ENCODE measurements at regions of chr9 and their contacts with region 1.

Region 1: DNA sequence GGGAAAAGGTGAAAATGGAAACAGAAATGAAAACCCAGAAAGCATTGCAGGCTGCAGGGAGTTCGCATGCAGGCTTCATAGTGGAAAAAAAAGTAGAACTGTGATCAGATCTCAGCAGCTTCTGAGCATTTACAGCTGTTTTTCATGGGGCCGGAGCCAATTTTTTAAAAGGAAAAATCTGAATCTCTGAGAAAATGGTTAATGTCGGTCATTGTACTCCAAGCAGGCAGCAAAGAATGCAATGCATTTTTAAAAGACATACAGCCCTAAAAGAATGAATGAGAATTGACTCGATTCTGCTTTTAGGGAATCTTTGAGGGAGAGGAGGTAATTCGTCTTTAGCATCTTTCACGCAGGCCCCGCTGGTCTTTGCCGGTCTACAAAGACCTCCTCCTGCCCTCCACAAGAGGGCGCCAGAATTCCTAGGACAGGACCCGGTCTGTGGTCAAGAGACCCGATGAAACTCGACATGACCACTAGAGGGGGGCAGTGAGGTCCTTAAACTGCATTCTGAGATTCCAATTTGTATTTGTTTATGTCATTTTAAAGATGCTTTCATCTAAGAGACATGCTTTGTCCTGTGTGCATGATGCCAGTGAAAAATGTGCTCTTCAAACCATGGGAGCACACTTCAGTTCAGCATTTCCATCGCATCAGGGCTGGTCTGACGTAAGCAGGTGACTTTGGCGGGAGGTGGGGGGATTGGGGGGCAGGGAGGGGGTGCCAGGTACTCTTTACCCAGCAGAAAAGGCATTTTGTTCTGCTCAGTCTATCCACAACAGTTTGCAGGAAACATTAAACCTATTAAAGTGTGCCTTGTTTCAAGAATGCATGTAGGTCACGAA is 43.7 kb upstream of the TMEM252 start:
- DNase-seq: peak; percentile 87 to 89
- ATAC-seq: peak; percentile 95
- H3K4me3 ChIP-seq: no peak overlapping the region
- H3K27ac ChIP-seq: no peak overlapping the region
- H3K4me1 ChIP-seq: no peaks in the 10 kb centered on the region
- H3K27me3 ChIP-seq: no peaks in the 10 kb centered on the region

Region 2: DNA sequence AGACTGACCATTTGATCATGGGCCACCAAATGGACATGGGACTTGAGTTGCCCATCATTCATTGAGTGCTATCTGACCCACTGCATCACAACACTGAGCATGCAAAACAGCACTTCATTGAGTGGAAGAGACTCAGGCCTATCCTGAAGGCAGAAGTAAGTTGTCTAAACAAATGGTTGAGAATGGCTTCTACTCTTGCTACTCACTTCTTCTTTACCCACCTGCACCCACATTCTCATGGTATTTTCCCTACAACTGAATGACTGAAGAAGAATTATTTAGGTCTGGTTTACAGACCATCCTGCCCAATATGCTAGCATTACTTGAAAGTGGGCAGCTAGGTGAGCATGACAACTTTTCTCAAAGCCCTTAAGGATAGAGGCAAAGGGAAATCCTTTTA is 79.6 kb after region 1 on chr9:
- intact Hi-C with region 1: no loop called
- DNase-seq: no peak
- ATAC-seq: no peak
- H3K4me3 ChIP-seq: no peak overlapping the region
- H3K27ac ChIP-seq: no peak overlapping the region
- H3K4me1 ChIP-seq: no peaks in the 10 kb centered on the region
- H3K27me3 ChIP-seq: no peaks in the 10 kb centered on the region

Region 3: DNA sequence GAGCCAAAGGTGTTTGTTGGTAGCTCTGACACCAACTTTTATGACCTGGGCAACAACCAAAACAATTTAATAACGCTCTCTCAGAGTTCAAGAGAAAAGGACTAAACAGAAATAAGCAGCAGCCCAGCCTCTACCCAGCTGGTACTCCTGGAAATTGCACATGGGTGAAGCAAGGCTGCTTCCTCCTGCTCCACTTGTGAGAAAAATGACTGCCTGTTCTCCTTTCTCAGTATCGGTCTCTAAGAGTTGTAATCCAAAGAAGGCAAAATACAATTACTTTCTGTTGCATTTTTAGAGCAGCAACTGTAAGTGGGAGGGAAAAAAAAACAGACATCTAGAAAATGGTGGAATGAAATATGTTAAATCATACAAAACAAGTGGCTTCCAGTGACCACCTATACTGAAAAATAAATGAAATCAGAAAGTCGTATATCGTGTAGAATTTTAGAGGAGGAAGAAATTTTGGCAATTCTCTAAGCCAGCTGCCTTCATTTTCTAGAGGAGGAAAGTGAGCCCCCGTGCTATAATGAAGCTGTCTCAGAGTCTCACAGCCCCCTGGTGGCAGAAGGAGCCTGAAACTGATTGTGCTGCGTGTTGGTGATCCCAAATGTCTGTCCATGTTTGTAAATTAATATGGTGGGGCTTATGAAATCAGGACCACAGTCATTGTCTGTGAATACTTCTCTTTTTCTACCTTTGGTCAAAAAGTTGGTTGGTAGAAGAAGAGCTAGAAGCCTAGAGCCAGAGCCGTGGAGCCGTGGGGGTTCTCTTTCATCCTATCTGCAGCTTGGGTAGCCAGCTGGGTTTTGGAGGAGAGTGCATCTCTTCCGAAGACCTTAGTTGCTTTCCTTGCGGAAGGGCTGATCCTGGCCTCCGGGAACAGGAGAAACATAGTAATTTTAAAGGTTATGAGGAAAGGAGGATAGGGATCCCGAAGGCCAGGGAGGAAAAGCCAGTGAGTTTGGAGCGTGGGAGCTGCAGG is 260.5 kb after region 1 on chr9:
- intact Hi-C with region 1: loop called (anchors 5 to 10 kb)
- DNase-seq: peak; percentile 62 to 81
- ATAC-seq: peak; percentile 58
- H3K4me3 ChIP-seq: no peak overlapping the region
- H3K27ac ChIP-seq: no peak overlapping the region
- H3K4me1 ChIP-seq: no peaks in the 10 kb centered on the region
- H3K27me3 ChIP-seq: no peaks in the 10 kb centered on the region

Region 4: DNA sequence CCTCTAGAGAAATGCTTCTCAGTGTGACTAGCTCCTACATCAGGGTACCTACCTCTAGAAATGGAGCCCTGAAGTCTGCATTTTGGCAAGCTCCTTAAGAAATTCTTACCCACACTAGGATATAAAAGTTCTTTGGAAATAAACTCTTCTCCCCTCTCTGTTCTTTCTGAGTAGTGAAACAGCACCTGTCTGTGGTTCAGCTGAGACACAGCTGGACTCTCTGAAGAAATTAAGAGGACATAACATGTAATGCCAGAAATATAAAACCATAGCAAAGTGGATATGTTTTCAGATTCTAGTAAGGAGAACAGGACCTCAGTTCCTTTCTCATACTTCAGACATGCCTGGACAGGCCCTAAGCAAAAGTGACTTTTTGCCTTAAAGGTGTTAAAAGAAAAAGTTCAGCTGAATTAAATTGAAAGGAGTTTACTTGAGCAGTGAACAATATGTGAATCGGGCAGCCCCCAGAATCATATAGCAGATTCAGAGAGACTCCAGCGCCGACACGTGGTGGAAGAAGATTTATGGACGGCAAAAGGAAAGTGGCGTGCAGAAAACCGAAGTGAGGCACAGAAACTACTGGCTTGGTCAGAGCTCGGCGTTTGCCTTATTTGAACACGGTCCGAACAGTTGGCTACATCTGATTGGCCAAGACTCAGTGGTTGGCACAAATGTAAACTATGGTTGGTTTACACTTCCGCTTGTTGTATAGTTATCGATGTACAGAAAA is 365.0 kb after region 1 on chr9:
- intact Hi-C with region 1: loop called (anchors 2 to 5 kb)
- DNase-seq: peak; percentile 57 to 78
- ATAC-seq: peak; percentile 63
- H3K4me3 ChIP-seq: no peak overlapping the region
- H3K27ac ChIP-seq: no peak overlapping the region
- H3K4me1 ChIP-seq: no peaks in the 10 kb centered on the region
- H3K27me3 ChIP-seq: peaks cover 0 to 1% of the 10 kb centered on the region in 2 donors

Region 5: GRCh38 chr9:68999393-69000105 is 415.1 kb after region 1 on chr9:
- intact Hi-C with region 1: loop called in 1 of 2 experiments (anchors 2 kb)
- DNase-seq: peak in 1 of 2 donors; percentile 56
- ATAC-seq: peak; percentile 85
- H3K4me3 ChIP-seq: no peak overlapping the region
- H3K27ac ChIP-seq: no peak overlapping the region
- H3K4me1 ChIP-seq: no peaks in the 10 kb centered on the region
- H3K27me3 ChIP-seq: no peaks in the 10 kb centered on the region